Kidney (tissue), 22 donors: ENCODE measurements at regions of chrX and their contacts with region 1.

Region 1: DNA sequence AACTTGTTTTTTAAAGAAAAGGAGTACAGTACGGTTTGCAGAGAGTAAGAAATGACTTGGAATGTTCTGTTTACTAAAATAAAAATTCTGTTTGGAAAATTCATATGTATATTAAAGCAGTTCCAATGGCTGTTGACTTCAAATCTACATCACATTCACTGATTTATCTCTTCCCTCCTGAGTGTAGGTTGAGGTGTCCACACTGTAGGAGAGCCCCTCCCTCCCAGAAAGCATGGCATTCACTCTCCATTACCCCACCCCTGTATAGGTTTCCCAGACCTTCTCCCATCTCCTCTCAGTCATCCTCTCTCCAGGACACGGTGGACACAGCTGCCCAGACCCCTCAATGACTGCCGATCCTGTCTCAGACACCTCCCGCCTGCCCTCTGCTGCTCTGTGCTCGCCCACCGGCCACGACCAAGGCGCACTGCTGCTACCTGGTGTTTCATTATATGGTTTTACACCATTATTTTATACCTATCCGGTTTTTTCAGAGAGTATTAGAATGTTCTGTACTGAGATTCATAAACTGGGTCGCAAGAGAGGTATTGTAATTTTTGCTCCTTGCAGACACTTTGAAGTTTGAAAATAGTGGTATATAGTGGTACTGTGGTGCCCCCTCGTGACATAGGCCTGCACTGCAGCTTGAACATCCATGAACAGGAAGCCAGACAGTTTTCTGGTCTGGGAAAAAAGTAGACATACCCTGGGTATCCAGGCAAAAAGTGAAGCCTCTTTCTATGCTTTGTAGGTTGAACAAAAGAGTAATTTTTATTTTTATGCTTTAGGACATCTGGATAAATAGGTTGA is 38.8 kb upstream of the BEX4 start:
- DNase-seq: peak in 4 of 5 donors; percentile 56 to 69 (median 61)
- H3K4me3 ChIP-seq: no peak overlapping the region
- H3K27ac ChIP-seq: no peak overlapping the region
- H3K4me1 ChIP-seq: peaks cover 0 to 2% (median 0%) of the 10 kb centered on the region in 3 donors
- H3K27me3 ChIP-seq: peaks cover 3% of the 10 kb centered on the region
- CTCF ChIP-seq: peak; percentile 51

Region 2: GRCh38 chrX:102950908-102951866 is 225.0 kb before region 1 on chrX:
- intact Hi-C with region 1: loop called (anchors 10 kb)
- DNase-seq: peak in 4 of 5 donors; percentile 44 to 68 (median 58)
- H3K4me3 ChIP-seq: peak overlapping the region in 2 of 3 donors; percentile 42
- H3K27ac ChIP-seq: no peak overlapping the region
- H3K4me1 ChIP-seq: no peaks in the 10 kb centered on the region
- H3K27me3 ChIP-seq: no peaks in the 10 kb centered on the region
- CTCF ChIP-seq: peak; percentile 48

Region 3: GRCh38 chrX:103124284-103124683 is 51.9 kb before region 1 on chrX:
- intact Hi-C with region 1: no loop called
- DNase-seq: no peak
- H3K4me3 ChIP-seq: no peak overlapping the region
- H3K27ac ChIP-seq: no peak overlapping the region
- H3K4me1 ChIP-seq: no peaks in the 10 kb centered on the region
- H3K27me3 ChIP-seq: no peaks in the 10 kb centered on the region
- CTCF ChIP-seq: no peak

Region 4: GRCh38 chrX:103573208-103573607 is 397.1 kb after region 1 on chrX:
- intact Hi-C with region 1: no loop called
- DNase-seq: no peak
- H3K4me3 ChIP-seq: no peak overlapping the region
- H3K27ac ChIP-seq: no peak overlapping the region
- H3K4me1 ChIP-seq: no peaks in the 10 kb centered on the region
- H3K27me3 ChIP-seq: no peaks in the 10 kb centered on the region
- CTCF ChIP-seq: no peak